B cell (primary cell): ENCODE measurements at regions of chr11 and their contacts with region 1.

Region 1: DNA sequence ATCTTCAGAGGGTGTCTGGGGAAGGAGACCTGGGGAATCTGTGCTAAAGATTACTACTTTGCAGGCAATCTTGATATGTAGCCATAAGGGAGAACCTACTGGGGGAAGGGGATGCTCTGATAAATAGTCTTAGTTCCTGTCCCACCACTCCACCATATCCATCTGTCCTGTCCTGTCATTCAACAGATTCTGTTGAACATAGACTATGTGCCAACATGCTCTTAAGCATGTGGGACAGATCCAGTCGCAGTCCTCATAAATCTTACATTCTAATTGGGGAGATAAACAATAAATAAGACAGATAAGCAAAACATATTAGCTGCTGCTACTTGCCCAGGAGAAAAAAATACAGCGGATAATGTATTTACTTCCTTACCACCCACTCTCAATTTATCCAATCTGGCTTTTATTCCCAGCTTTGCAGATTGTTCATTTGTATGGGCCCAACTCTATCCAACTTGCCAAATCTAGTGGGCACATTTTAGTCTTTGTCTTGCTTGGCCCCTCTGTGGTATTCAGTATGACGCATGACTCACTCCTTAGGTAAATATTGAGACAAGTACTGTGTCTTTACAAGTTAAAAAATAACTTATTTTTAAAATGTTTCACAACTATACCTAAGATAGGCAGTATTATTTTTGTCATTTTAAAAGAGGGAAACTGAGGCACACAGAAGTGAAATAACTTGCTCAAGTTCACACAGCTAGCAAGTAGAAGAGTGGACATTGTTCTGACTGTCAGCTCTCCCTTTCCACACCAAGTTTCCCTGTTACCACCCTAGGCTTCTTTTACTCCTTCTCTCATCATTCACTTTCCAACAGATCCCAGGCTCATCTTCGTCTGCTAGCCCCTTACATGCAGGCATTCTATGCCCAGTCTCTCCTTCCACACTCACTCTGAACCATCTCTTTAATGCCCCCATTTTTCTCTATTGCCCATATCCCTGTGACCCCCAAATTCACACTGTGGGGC is 133.6 kb upstream of the SESN3 start:
- DNase-seq: no peak
- ATAC-seq: no peak
- H3K4me3 ChIP-seq: no peak overlapping the region
- H3K4me3 Mint-ChIP-seq: no peak overlapping the region
- H3K27ac ChIP-seq: no peak overlapping the region
- H3K27ac Mint-ChIP-seq: no peak overlapping the region
- H3K4me1 ChIP-seq: peaks cover 7 to 9% of the 10 kb centered on the region in 2 donors
- H3K4me1 Mint-ChIP-seq: peaks cover 9% of the 10 kb centered on the region
- H3K27me3 ChIP-seq: no peaks in the 10 kb centered on the region
- H3K27me3 Mint-ChIP-seq: no peaks in the 10 kb centered on the region
- CTCF ChIP-seq: no peak

Region 2: GRCh38 chr11:95419915-95420314 is 55.3 kb after region 1 on chr11:
- CTCF ChIA-PET with region 1: no interaction called
- POLR2A ChIA-PET with region 1: no interaction called
- intact Hi-C with region 1: loop called (anchors 10 kb)
- DNase-seq: no peak
- ATAC-seq: no peak
- H3K4me3 ChIP-seq: no peak overlapping the region
- H3K4me3 Mint-ChIP-seq: no peak overlapping the region
- H3K27ac ChIP-seq: no peak overlapping the region
- H3K27ac Mint-ChIP-seq: no peak overlapping the region
- H3K4me1 ChIP-seq: no peaks in the 10 kb centered on the region
- H3K4me1 Mint-ChIP-seq: no peaks in the 10 kb centered on the region
- H3K27me3 ChIP-seq: no peaks in the 10 kb centered on the region
- H3K27me3 Mint-ChIP-seq: no peaks in the 10 kb centered on the region
- CTCF ChIP-seq: no peak

Region 3: GRCh38 chr11:95835768-95836488 is 471.3 kb after region 1 on chr11:
- CTCF ChIA-PET with region 1: no interaction called
- POLR2A ChIA-PET with region 1: no interaction called
- intact Hi-C with region 1: no loop called
- DNase-seq: peak; percentile 67
- ATAC-seq: peak; percentile 90
- H3K4me3 ChIP-seq: no peak overlapping the region
- H3K4me3 Mint-ChIP-seq: no peak overlapping the region
- H3K27ac ChIP-seq: no peak overlapping the region
- H3K27ac Mint-ChIP-seq: no peak overlapping the region
- H3K4me1 ChIP-seq: no peaks in the 10 kb centered on the region
- H3K4me1 Mint-ChIP-seq: no peaks in the 10 kb centered on the region
- H3K27me3 ChIP-seq: no peaks in the 10 kb centered on the region
- H3K27me3 Mint-ChIP-seq: no peaks in the 10 kb centered on the region
- CTCF ChIP-seq: peak; percentile 92